ENCODE measurements at regions of chr17 and their contacts with region 1.

Region 1: GRCh38 chr17:27544350-27545131 is 86.4 kb upstream of the LGALS9 start:
- DNase-seq: peak; percentile 92
- H3K4me3 Mint-ChIP-seq: peak overlapping the region; percentile 64
- H3K27ac Mint-ChIP-seq: peak overlapping the region; percentile 90
- H3K4me1 Mint-ChIP-seq: peaks cover 78% of the 10 kb centered on the region
- H3K27me3 Mint-ChIP-seq: peaks cover 2% of the 10 kb centered on the region

Region 2: DNA sequence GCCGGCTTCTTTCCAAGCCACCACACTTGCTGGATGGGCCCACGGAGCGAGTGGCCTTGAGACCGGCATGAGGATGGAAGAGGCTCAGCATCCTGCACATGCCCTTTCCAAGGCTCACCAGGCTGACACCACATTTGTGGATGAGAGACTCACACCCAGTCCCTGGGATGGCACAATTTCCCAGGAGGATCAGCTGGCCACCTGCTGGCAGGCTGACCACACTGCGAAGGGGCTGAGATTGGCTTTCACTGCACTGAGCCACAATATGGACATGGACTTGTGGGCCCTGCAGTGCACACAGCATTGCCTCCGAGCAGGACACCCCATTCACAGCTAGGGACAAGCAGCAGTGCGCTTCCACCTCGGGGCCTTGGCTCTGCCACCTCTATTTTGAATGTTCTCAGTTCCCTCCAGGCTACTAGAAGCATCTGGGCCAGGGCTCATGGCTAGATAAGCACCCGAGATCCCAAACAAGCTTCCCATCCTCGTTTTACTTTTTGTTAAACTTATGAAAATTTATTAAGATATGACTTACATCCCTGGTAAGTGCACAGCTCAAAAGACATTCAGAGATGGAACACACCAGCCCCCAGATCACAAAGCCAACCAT is 113.6 kb before region 1 on chr17:
- CTCF ChIA-PET with region 1: no interaction called
- POLR2A ChIA-PET with region 1: no interaction called
- intact Hi-C with region 1: no loop called
- DNase-seq: no peak
- H3K4me3 Mint-ChIP-seq: no peak overlapping the region
- H3K27ac Mint-ChIP-seq: no peak overlapping the region
- H3K4me1 Mint-ChIP-seq: no peaks in the 10 kb centered on the region
- H3K27me3 Mint-ChIP-seq: no peaks in the 10 kb centered on the region

Region 3: DNA sequence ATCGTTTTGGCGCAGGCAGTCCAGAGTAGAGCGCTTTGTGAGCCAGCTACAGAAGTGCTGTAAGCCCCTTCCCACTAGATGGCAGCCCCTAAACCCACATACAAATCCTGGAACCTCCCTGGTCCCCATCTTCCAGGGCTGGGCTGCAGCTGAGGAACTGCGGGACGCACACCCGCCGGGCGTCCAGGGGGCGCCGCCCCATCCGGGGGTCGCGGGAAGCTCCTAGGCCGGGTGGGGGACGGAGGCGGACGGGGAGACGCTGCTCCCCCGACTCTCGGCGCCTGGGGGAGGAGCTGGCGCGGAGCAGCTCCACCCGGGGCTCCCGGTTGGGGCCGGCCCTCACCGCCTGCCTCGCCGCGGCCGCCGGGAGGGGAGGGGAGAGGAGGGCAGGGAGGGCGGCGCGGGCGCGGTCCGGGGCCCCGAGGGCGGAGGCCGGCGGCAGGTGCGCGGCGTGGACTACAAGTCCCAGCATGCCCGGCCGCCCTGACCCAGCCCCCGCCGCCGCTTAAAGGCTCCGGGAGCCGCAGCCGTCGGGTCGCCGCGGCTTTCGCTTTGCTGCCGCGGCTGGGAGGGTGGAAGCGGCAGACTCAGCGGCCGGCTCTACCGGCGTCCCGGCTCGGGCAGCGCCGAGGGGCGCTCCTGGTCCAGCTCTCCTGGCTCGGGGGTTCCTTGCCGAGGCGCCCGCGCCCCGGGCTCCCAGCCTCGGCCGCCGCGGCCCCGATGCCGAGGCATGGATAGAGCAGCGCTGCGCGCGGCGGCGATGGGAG is 88.4 kb before region 1 on chr17 and contains the start of gene KSR1:
- CTCF ChIA-PET with region 1: interaction called, 16 read pairs
- POLR2A ChIA-PET with region 1: interaction called, 9 read pairs
- intact Hi-C with region 1: no loop called
- DNase-seq: peak; percentile 88
- H3K4me3 Mint-ChIP-seq: peak within 1 kb of the TSS; percentile 92
- H3K27ac Mint-ChIP-seq: peak within 1 kb of the TSS; percentile 80
- H3K4me1 Mint-ChIP-seq: peaks cover 40% of the 10 kb centered on the region
- H3K27me3 Mint-ChIP-seq: no peaks in the 10 kb centered on the region
- total RNA-seq, gene KSR1: 55.0 to 60.8 TPM

Region 4: GRCh38 chr17:27466743-27467375 is 77.7 kb before region 1 on chr17:
- CTCF ChIA-PET with region 1: interaction called, 16 read pairs
- POLR2A ChIA-PET with region 1: interaction called, 47 read pairs
- intact Hi-C with region 1: loop called (anchors 1 kb)
- DNase-seq: peak; percentile 93
- H3K4me3 Mint-ChIP-seq: peak overlapping the region; percentile 68
- H3K27ac Mint-ChIP-seq: peak overlapping the region; percentile 90
- H3K4me1 Mint-ChIP-seq: peaks cover 91% of the 10 kb centered on the region
- H3K27me3 Mint-ChIP-seq: no peaks in the 10 kb centered on the region

Region 5: DNA sequence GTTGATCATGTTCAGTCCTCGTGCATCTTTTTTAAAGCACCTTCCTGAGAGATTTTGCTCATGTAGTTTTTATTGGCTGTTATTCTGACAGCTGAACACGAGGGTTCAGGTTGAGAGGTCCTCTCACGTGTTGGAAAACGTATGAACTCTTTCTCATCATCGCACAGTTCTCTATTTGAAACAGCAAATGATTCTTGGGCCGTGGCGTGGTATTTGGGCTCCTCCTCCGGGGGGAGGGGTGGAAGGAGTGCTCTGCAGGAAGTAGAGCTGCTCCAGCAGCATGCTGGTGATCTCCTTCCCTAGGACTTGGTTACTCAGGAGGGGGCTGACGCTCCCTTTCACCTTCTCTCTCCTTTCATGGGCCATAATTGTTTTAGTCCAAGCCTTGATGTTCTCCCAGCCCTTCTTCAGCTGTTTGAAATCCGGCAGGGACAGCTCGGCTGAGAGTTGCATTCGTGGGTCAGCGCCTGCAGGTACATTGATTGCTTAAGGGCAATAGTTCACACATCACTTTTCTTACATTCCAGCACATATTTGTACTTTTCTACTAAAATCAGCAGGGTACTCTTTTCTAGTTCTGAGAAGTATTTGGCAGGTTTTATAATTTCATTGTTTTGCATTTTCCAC is 17.8 kb before region 1 on chr17:
- CTCF ChIA-PET with region 1: interaction called, 3 read pairs
- POLR2A ChIA-PET with region 1: interaction called, 3 read pairs
- intact Hi-C with region 1: loop called (anchors 2 kb)
- DNase-seq: peak; percentile 78
- H3K4me3 Mint-ChIP-seq: no peak overlapping the region
- H3K27ac Mint-ChIP-seq: no peak overlapping the region
- H3K4me1 Mint-ChIP-seq: peaks cover 70% of the 10 kb centered on the region
- H3K27me3 Mint-ChIP-seq: no peaks in the 10 kb centered on the region

Region 6: DNA sequence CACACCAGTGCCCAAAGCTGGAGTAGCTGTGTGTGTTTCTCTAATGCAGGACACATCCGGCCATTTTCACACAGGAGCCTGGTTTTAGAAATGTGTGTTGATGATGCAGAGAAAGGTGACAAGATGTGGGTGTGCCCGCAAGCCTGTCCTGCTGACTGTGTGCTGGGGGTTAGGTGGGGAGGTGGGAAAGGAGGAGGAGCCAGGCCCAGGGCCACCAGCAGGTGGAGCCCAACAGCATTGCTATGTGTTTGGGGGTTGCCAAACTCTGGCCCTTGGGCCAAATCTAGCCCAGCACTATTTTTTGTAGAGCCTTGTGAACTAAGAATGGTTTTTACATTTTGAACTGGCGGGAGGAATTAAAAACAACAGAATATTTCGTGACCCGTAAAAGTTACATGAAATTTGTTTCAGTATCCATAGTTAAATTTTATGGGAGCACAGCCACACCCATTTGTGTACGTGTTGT is 24.7 kb after region 1 on chr17:
- CTCF ChIA-PET with region 1: interaction called, 9 read pairs
- POLR2A ChIA-PET with region 1: interaction called, 3 read pairs
- intact Hi-C with region 1: loop called (anchors 1 kb)
- DNase-seq: peak; percentile 85
- H3K4me3 Mint-ChIP-seq: no peak overlapping the region
- H3K27ac Mint-ChIP-seq: no peak overlapping the region
- H3K4me1 Mint-ChIP-seq: peaks cover 71% of the 10 kb centered on the region
- H3K27me3 Mint-ChIP-seq: no peaks in the 10 kb centered on the region

Region 7: DNA sequence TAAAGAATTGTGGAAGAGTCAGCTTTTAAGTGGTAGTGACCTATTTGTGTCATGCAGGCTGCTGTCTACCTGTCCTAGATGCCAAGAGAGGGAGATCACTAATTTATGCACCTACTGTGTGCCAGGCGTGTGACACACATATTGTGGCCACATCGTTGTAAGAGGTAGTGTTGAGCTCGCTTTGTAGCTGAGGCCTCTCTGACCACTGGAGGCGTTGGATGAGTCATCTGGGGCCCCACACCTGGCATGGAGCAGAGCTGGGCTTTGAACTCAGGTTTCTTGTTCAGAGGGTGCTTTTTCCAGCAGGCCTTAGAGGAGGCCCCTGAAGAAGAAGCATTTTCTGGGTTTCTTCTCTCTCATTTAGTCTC is 34.2 kb after region 1 on chr17:
- CTCF ChIA-PET with region 1: interaction called, 4 read pairs
- POLR2A ChIA-PET with region 1: interaction called, 3 read pairs
- intact Hi-C with region 1: loop called (anchors 1 kb)
- DNase-seq: peak; percentile 90
- H3K4me3 Mint-ChIP-seq: no peak overlapping the region
- H3K27ac Mint-ChIP-seq: peak overlapping the region; percentile 84
- H3K4me1 Mint-ChIP-seq: peaks cover 64% of the 10 kb centered on the region
- H3K27me3 Mint-ChIP-seq: no peaks in the 10 kb centered on the region

Measured in activated CD4-positive, alpha-beta memory T cell treated with anti-CD3 and anti-CD28 coated beads for 36 hours (primary cell).